HEK293 (cell line): ENCODE measurements at regions of chr11 and their contacts with region 1.

Region 1: GRCh38 chr11:119474682-119475596 is 52.0 kb upstream of the THY1 start:
- H3K4me3 ChIP-seq: no peak overlapping the region
- H3K27ac ChIP-seq: no peak overlapping the region
- H3K4me1 ChIP-seq: no peaks in the 10 kb centered on the region
- CTCF ChIP-seq: peak; percentile 74

Region 2: GRCh38 chr11:119381181-119381988 is 93.6 kb before region 1 on chr11 and contains the start of gene USP2:
- CTCF ChIA-PET with region 1: interaction called, 28 read pairs
- POLR2A ChIA-PET with region 1: no interaction called
- H3K4me3 ChIP-seq: peak within 1 kb of the TSS; percentile 45
- H3K27ac ChIP-seq: no peak within 1 kb of the TSS
- H3K4me1 ChIP-seq: no peaks in the 10 kb centered on the region; the same call in 1 of the 2 replicates
- CTCF ChIP-seq: peak; percentile 95

Region 3: DNA sequence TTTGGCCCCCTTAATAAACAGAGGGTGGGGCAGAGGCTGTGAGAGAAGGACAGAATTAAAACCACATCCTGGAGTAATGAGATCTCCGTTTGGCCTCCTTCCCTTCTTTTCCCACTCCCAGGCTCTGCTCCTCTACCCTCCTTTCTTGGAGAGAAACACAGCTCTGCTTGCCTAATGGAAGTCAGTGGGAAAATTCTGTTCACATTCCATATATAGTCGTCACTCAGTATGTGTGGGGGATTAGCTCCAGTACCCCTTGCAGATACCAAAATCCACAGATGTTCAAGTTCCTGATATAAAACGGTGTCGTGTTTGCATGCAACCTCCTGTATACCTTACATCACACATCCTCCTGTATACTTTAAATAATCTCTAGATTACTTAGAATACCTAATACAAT is 14.4 kb before region 1 on chr11:
- CTCF ChIA-PET with region 1: interaction called, 11 read pairs
- POLR2A ChIA-PET with region 1: no interaction called
- H3K4me3 ChIP-seq: no peak overlapping the region
- H3K27ac ChIP-seq: no peak overlapping the region
- H3K4me1 ChIP-seq: no peaks in the 10 kb centered on the region
- CTCF ChIP-seq: no peak